ENCODE measurements at regions of chr14 and their contacts with region 1.

Region 1: GRCh38 chr14:67187210-67187609 is 2.0 kb upstream of the GARIN2 start:
- DNase-seq: no peak
- H3K4me3 Mint-ChIP-seq: no peak overlapping the region
- H3K27ac Mint-ChIP-seq: no peak overlapping the region
- H3K4me1 Mint-ChIP-seq: peaks cover 19% of the 10 kb centered on the region
- H3K27me3 Mint-ChIP-seq: no peaks in the 10 kb centered on the region

Region 2: DNA sequence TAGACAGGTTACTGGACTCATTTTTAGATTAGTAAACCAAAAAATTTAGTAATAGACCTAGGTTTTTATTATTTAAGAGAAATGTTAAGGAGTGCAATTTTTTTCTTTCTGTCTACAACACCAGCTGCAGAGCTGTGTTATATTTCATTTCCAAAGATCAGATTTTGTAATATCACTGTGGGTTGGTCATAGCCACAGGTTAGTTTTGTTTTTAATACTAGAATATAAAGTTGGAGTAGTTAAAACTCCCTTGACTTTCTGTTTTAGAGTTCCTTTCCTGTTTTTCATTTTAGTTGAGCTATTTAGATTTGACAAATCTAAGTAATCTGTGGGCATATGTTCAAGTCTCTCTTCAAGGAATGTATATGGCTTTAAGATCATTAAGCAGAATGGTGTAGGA is 28.6 kb before region 1 on chr14:
- CTCF ChIA-PET with region 1: no interaction called
- POLR2A ChIA-PET with region 1: no interaction called
- intact Hi-C with region 1: loop called (anchors 2 kb)
- DNase-seq: no peak
- H3K4me3 Mint-ChIP-seq: no peak overlapping the region
- H3K27ac Mint-ChIP-seq: no peak overlapping the region
- H3K4me1 Mint-ChIP-seq: peaks cover 10% of the 10 kb centered on the region
- H3K27me3 Mint-ChIP-seq: no peaks in the 10 kb centered on the region

Region 3: DNA sequence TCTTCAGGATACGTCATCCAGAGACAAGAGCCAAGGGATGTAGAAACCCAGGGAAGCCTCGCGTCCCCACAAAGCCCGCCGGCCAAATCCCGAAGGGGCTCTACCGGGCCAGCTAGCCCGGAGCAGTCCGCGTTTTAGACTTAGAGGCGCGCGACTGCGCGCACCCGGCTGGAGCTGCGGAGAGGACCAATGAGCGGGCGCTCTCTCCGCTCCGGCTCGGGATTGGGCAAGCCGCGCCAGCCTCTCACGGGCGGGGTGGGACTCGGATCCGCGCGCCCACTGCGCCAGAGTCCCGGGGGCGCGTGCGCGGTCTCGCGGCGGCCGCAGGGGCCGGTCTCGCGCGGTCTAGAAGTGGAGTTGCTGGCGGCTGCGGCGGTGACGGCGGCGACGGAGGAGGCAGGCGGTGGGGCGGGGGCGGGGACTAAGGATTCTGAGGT is 53.8 kb after region 1 on chr14:
- CTCF ChIA-PET with region 1: no interaction called
- POLR2A ChIA-PET with region 1: interaction called, 3 read pairs
- intact Hi-C with region 1: loop called (anchors 1 kb)
- DNase-seq: peak; percentile 96
- H3K4me3 Mint-ChIP-seq: peak overlapping the region; percentile 82
- H3K27ac Mint-ChIP-seq: peak overlapping the region; percentile 83
- H3K4me1 Mint-ChIP-seq: peaks cover 8% of the 10 kb centered on the region
- H3K27me3 Mint-ChIP-seq: no peaks in the 10 kb centered on the region

Region 4: DNA sequence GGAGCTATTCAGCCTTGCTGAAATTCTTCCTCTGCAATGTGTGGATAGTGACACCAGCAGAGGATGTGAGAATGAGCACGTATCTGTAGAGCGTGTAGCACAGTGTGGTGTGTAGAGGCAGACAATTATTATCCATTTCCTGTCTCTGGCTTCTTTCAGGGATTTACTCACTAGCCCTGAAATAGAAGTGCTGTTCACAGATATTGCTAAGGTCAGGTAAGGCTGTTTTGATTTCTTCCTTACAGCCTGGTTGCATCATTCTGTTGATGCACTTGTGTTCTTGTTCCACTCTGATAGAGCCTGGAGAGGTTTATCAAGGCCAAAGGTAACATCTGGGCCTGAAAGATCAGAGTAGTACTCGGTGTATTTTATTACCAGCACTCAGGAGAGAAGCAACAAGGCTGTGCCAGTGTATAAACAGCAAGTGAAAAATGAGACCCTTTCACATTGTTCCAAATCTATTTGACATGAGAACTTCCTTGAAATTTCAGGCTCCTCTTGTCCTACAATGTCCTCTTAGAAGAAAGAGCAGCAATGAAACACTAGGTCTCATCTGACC is 449.2 kb after region 1 on chr14:
- CTCF ChIA-PET with region 1: no interaction called
- POLR2A ChIA-PET with region 1: no interaction called
- intact Hi-C with region 1: no loop called
- DNase-seq: no peak
- H3K4me3 Mint-ChIP-seq: no peak overlapping the region
- H3K27ac Mint-ChIP-seq: no peak overlapping the region
- H3K4me1 Mint-ChIP-seq: no peaks in the 10 kb centered on the region
- H3K27me3 Mint-ChIP-seq: no peaks in the 10 kb centered on the region